ENCODE measurements at regions of chr3 and their contacts with region 1.

Region 1: GRCh38 chr3:50327943-50328691 is at the start of gene TUSC2:
- DNase-seq: peak; percentile 97 to 99 (median 98)
- H3K4me3 ChIP-seq: peak within 1 kb of the TSS; percentile 75 to 100 (median 97)
- H3K27ac ChIP-seq: peak within 1 kb of the TSS in 56 of 59 donors; percentile 35 to 94 (median 82)
- H3K27me3 ChIP-seq: no peaks in the 10 kb centered on the region
- CTCF ChIP-seq: peak in 29 of 56 donors; percentile 10 to 59 (median 30)
- total RNA-seq, gene TUSC2: 29.2 to 71.0 (median 52.4) TPM

Region 2: DNA sequence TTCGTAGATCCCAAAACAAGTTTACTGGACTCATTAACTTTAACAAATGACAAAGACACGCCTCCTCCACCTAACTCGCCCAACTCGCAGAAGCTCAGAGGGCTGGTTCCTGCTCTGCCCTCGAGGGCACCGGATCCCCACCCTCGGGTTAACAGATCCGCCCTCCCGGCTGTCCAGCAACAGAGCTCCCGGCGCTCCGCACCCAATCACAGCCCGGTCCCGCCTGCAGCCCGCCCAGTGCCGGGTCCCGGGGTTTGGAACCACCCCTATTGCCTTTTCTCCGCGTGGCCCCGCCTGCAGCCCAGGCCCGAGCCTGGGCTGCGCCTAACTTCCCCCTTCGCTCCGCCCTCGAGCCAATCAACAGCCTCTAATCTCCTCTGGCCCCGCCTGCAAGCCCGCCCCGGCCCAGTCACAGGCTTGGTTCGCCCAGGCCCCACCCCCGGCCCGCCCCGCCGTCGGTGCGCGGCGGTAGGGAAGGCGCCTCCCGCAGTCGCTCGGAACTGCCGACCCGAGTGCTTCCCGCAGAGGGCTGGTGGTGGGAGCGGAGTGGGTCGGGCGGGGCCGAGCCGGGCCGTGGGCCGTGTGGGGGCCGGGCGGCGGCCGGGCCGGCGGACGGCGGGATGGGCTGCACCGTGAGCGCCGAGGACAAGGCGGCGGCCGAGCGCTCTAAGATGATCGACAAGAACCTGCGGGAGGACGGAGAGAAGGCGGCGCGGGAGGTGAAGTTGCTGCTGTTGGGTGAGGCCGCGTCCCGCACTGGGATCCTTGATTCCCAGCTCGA is 92.2 kb before region 1 on chr3 and contains the start of gene GNAI2:
- intact Hi-C with region 1: loop called in 1 of 2 experiments (anchors 5 kb)
- DNase-seq: peak; percentile 93 to 99 (median 98)
- H3K4me3 ChIP-seq: peak within 1 kb of the TSS; percentile 73 to 98 (median 87)
- H3K27ac ChIP-seq: peak within 1 kb of the TSS; percentile 58 to 100 (median 89)
- H3K27me3 ChIP-seq: no peaks in the 10 kb centered on the region
- CTCF ChIP-seq: peak in 36 of 56 donors; percentile 10 to 61 (median 35)
- total RNA-seq, gene GNAI2: 117 to 240 (median 161) TPM

Region 3: DNA sequence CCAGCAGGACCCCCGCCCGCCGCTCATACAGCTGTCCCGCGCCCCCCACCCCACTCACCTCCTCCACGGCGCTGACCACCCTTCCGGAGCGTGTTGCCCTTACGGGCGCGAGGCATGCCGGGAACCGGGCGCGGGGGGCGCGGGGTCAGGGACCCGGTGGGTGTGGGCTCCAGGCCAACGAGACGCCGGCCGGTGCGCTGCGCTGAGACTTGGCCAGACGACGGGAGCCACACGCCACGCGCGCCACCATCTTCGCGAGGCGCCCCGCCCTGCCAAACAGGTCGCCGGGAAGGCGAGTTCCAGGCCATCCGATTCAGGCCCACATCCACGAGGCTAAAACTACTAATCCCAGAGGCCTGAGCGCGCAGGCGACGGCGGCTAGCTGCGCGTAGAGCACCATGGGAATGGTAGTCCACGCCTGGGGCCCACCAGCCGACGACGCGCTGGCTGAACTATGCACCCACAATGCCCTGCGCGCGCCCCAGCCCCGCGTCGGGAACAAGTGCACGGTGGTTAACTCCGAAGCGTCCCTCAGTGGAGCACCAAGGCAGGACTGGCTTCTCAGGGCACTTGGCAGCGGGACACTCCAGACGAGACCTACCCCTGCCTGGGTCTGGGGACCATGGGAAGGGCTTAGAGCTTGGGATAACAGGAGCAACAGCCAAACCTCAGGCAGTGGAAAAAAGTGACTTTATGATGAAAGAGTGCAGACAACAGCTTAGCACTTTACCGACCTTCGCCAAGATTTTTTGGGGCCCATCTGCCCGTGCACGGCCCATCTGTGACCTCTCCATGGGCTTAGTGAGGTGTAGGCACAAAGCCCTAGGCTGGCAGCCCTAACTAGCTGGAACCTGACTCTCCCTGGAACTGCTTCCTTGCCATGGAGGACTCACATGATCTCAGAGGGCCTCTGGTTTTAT is 35.7 kb before region 1 on chr3 and contains the start of gene IFRD2:
- intact Hi-C with region 1: loop called (anchors 5 kb)
- DNase-seq: peak; percentile 97 to 99 (median 98)
- H3K4me3 ChIP-seq: peak within 1 kb of the TSS; percentile 70 to 100 (median 95)
- H3K27ac ChIP-seq: peak within 1 kb of the TSS in 57 of 59 donors; percentile 20 to 94 (median 81)
- H3K27me3 ChIP-seq: no peaks in the 10 kb centered on the region
- CTCF ChIP-seq: peak in 50 of 56 donors; percentile 6 to 65 (median 36)
- total RNA-seq, gene IFRD2: 15.0 to 46.2 (median 28.8) TPM

Region 4: DNA sequence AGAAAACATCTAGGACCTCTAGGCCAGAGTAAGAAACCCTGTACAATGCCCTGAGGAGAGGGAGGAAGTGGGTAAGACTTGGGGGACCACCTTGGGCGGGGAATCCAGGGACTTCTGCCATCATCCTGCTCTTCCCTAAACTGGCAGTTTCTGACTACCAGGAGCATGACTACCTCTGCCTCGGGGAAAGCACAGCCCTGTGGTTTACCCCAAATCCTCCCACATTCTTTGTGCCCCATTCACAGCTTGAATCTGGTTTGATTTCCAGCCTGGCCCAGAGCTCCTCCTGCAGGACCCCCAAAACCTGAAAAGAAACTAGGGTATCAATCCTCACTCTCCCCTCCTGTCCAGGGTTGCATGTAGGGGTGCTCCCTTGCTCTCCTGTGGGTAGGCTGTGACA is 234.7 kb after region 1 on chr3:
- intact Hi-C with region 1: no loop called
- DNase-seq: no peak
- H3K4me3 ChIP-seq: no peak overlapping the region
- H3K27ac ChIP-seq: peak overlapping the region in 1 of 59 donors; percentile 90
- H3K27me3 ChIP-seq: no peaks in the 10 kb centered on the region
- CTCF ChIP-seq: no peak